Testis (tissue), 5 donors: ENCODE measurements at regions of chr3 and their contacts with region 1.

Region 1: GRCh38 chr3:190205739-190206138 is 85.0 kb upstream of the P3H2 start:
- DNase-seq: no peak
- H3K4me3 ChIP-seq: no peak overlapping the region
- H3K27ac ChIP-seq: no peak overlapping the region
- H3K4me1 ChIP-seq: no peaks in the 10 kb centered on the region
- H3K27me3 ChIP-seq: no peaks in the 10 kb centered on the region
- CTCF ChIP-seq: no peak
- POLR2A ChIP-seq: no peak

Region 2: DNA sequence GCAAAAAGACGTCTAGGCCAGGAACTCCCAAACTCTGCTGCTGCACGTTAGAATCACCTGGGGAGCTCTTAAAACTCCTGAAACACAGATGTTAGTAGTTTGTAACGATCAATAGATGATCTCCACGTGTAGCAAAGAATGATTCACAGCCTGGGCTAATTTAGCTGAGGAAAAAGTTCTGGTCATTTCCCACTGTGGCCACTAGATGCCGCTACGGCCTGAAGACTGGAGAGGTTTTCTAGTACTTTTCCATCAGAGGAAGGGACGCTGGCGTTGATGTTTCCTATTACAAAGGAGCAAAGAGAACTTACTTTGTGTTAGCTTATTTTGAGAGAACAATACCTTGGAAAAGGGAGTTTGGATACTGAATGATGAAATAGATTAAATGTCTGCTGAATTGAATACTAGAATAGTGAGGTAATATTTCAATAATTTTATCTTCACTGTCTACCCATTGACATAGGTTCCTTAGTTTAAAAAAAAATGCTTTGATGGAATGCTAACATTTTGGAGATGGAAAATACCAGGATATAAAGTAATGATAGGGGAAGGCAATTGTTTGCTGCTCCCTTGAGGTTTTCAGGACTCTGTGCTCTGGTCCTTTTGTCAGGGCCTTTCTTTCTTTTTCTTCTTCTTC is 244.1 kb before region 1 on chr3:
- intact Hi-C with region 1: loop called (anchors 10 kb)
- DNase-seq: peak; percentile 87
- H3K4me3 ChIP-seq: no peak overlapping the region
- H3K27ac ChIP-seq: no peak overlapping the region
- H3K4me1 ChIP-seq: no peaks in the 10 kb centered on the region
- H3K27me3 ChIP-seq: no peaks in the 10 kb centered on the region
- CTCF ChIP-seq: peak; percentile 79 to 94 (median 89)
- POLR2A ChIP-seq: no peak